ENCODE measurements at regions of chr6 and their contacts with region 1.

Region 1: GRCh38 chr6:36027501-36028087 is at the start of gene MAPK14:
- DNase-seq: peak; percentile 99
- ATAC-seq: peak; percentile 94
- total RNA-seq, gene MAPK14: 27.3 TPM

Region 2: DNA sequence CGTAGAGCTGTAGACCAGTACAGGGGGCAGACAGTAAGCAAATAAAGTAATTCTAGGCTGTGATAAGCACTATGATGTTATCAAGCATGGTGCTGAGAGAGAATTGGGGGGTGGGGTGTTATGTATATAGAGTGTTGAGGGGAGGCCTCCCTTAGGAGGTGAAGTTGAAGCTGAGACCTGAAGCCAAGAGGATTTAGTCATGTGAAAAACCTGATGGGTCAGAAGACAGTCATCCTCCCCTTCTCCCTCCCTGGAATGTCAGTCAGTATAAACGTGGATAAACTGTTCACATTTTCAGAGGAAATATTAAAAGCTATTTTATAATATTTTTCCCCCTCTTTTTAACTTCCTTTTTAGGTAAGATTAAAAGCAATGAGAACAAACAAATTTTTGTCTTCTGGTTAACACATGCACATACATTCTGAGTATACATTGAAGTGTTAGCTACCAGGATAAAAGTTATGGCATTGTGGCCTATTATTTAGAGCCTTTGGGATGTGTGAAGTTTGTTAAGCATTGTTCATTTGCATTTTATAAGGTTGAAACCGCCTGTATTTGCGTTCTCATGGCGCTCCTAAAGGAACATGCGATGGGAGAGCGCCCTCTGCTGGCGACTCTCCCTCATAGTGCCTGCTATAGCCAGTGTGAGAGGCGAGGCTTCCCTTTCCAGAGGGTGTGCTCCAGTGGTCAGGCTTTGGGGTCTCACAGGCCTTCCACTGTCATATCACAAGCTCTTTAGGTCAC is 67.3 kb after region 1 on chr6:
- intact Hi-C with region 1: loop called (anchors 2 kb)
- DNase-seq: peak; percentile 92
- ATAC-seq: peak; percentile 94

Region 3: DNA sequence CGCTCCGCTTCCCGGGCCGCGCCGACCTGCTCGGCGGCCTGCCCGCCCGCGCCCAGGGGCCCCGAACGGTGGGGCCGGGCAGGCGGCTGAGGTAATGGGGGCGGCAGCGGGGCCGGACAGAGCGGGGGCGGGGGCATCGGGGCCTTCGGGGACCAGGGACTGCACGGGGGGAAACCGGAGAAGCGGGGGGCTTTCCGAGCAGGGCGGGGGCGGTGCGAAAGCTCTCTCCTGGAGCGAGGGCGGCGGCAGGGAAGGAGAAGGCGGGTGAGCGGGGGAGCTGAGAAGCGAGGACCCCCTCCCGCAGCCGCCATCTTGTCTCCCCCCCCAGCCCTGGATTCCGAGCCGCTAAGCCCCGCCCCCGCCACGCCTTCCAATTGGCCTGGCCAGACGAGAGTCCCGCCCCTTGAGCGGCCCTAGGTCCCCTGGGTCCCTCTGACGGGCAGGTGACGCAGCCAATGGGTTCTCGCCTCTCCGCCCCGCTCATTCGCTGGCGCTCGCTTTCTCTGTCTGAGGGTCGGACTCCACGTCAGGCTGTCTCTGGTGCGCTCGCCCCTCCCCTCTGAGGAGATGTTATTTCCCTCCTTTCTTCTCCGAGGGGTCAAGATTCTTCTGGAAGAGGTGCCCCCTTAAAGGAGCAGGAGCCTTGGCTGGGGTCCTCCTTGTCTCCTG is 169.4 kb after region 1 on chr6:
- intact Hi-C with region 1: loop called (anchors 5 kb)
- DNase-seq: peak; percentile 100
- ATAC-seq: peak; percentile 97

Measured in left ventricle myocardium superior (tissue), 1 donor.